ENCODE measurements at regions of chr2 and their contacts with region 1.

Region 1: GRCh38 chr2:230225486-230225885 is at the start of gene SP140:
- DNase-seq: peak; percentile 81
- H3K4me3 Mint-ChIP-seq: peak within 1 kb of the TSS; percentile 89
- H3K27ac Mint-ChIP-seq: peak within 1 kb of the TSS; percentile 97
- H3K4me1 Mint-ChIP-seq: peaks cover 41% of the 10 kb centered on the region
- H3K27me3 Mint-ChIP-seq: no peaks in the 10 kb centered on the region
- total RNA-seq, gene SP140: 316 and 317 TPM in 2 replicates

Region 2: GRCh38 chr2:229825476-229825875 is 400.0 kb before region 1 on chr2:
- intact Hi-C with region 1: loop called (anchors 5 kb)
- DNase-seq: no peak
- H3K4me3 Mint-ChIP-seq: no peak overlapping the region
- H3K27ac Mint-ChIP-seq: no peak overlapping the region
- H3K4me1 Mint-ChIP-seq: peaks cover 21% of the 10 kb centered on the region
- H3K27me3 Mint-ChIP-seq: no peaks in the 10 kb centered on the region

Region 3: DNA sequence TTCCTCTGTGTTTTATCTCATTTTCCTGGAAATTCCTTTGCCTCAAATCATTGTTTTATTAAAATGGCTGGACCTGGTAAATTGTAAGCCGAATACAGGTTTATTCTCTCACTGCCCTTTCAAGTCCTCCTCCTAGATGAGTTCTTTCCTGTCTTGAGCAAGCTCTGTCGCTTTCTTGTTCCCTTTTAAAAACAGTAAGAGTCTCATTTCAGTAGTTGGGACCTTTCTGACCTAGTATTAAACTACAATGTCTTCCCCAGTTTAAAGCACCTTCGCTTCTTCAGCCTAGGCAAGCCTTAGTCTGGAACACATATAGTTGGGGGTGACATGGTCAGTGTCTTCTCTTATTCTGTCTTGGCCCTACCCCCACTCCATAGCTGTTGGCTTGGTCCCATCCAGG is 60.6 kb after region 1 on chr2:
- intact Hi-C with region 1: loop called (anchors 5 kb)
- DNase-seq: no peak
- H3K4me3 Mint-ChIP-seq: no peak overlapping the region
- H3K27ac Mint-ChIP-seq: peak overlapping the region; percentile 4
- H3K4me1 Mint-ChIP-seq: peaks cover 34% of the 10 kb centered on the region
- H3K27me3 Mint-ChIP-seq: no peaks in the 10 kb centered on the region

Region 4: GRCh38 chr2:230326453-230327417 is 101.2 kb after region 1 on chr2 and contains the start of gene SP140L:
- intact Hi-C with region 1: loop called (anchors 5 kb)
- DNase-seq: peak; percentile 76
- H3K4me3 Mint-ChIP-seq: peak within 1 kb of the TSS; percentile 91
- H3K27ac Mint-ChIP-seq: peak within 1 kb of the TSS; percentile 92
- H3K4me1 Mint-ChIP-seq: peaks cover 67% of the 10 kb centered on the region
- H3K27me3 Mint-ChIP-seq: no peaks in the 10 kb centered on the region
- total RNA-seq, gene SP140L: 55.7 and 59.1 TPM in 2 replicates

Region 5: DNA sequence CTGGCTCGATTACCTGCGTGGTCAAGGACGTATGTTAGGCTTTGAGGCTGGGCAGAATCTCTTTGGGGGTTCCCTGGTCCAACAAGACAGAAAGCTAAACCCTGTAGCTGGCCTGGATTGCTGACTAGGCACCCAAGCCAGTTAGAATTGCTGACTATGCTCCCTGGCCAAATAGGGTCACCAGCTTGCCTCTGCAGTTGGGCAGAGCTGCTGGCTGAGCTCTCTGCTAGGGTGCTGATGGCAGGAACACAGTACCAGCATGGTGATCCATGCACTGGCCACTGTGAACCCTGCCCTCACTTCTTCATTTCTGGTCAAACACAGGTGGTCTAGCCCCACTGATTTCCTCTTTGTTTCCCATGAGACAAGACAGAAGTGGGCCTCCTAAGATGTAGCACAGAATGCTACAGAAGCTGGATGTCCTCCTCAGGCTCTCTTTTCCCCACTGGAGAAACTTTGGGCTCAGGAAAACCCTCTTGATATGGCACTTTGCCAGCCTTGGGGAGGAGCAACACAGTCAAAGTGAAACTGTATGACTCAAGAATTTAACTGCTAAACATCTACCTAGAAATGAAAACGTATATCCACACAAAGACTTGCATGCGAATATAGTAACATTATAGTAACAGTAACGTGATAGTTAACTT is 122.3 kb after region 1 on chr2:
- intact Hi-C with region 1: loop called (anchors 5 kb)
- DNase-seq: peak; percentile 45
- H3K4me3 Mint-ChIP-seq: peak overlapping the region; percentile 61
- H3K27ac Mint-ChIP-seq: peak overlapping the region; percentile 94
- H3K4me1 Mint-ChIP-seq: peaks cover 73% of the 10 kb centered on the region
- H3K27me3 Mint-ChIP-seq: no peaks in the 10 kb centered on the region

Region 6: GRCh38 chr2:230411570-230412370 is 186.3 kb after region 1 on chr2:
- intact Hi-C with region 1: loop called (anchors 5 kb)
- DNase-seq: peak; percentile 74
- H3K4me3 Mint-ChIP-seq: peak overlapping the region; percentile 98
- H3K27ac Mint-ChIP-seq: peak overlapping the region; percentile 100
- H3K4me1 Mint-ChIP-seq: peaks cover 61% of the 10 kb centered on the region
- H3K27me3 Mint-ChIP-seq: no peaks in the 10 kb centered on the region

Region 7: GRCh38 chr2:230643576-230644291 is 418.2 kb after region 1 on chr2:
- intact Hi-C with region 1: loop called (anchors 5 kb)
- DNase-seq: peak; percentile 51
- H3K4me3 Mint-ChIP-seq: peak overlapping the region; percentile 40
- H3K27ac Mint-ChIP-seq: peak overlapping the region; percentile 98
- H3K4me1 Mint-ChIP-seq: peaks cover 24% of the 10 kb centered on the region
- H3K27me3 Mint-ChIP-seq: no peaks in the 10 kb centered on the region

Region 8: DNA sequence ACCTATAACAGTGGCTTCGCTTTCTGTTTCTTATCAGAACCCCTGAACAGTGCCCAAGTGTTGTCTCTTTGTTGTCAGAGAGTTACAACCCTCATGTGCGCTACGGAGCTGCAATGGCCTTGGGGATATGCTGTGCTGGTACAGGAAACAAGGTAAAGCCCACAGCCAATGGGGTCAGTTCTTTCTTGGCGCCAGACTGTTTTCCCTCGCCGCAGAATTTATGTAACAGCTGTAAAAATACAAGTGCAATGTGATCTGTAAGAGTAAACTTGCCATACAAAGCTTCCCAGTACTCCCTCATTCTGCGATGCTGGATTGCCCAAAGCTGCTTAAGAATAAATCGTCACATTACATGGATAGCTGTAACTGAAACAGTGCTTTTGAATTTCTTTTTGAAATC is 913.2 kb after region 1 on chr2:
- intact Hi-C with region 1: no loop called
- DNase-seq: no peak
- H3K4me3 Mint-ChIP-seq: no peak overlapping the region
- H3K27ac Mint-ChIP-seq: no peak overlapping the region
- H3K4me1 Mint-ChIP-seq: no peaks in the 10 kb centered on the region
- H3K27me3 Mint-ChIP-seq: no peaks in the 10 kb centered on the region

Measured in activated T-helper 2 cell treated with anti-CD3 and anti-CD28 coated beads, Interferon-gamma antibody, Interleukin-2, Interleukin-4, amounts not matched to agents 10 μg/mL and 5 μg/mL and 100 μg/mL, durations not matched to agents 14 hours and 24 hours and 36 hours (primary cell).